Activated CD4-positive, alpha-beta T cell treated with anti-CD3 and anti-CD28 coated beads for 36 hours (primary cell): ENCODE measurements at regions of chr17 and their contacts with region 1.

Region 1: GRCh38 chr17:43211480-43212402 is at the start of gene TMEM106A:
- DNase-seq: peak; percentile 88
- ATAC-seq: peak; percentile 92
- H3K4me3 Mint-ChIP-seq: peak within 1 kb of the TSS; percentile 83
- H3K27ac Mint-ChIP-seq: peak within 1 kb of the TSS; percentile 92
- H3K4me1 Mint-ChIP-seq: peaks cover 25% of the 10 kb centered on the region
- H3K27me3 Mint-ChIP-seq: no peaks in the 10 kb centered on the region
- total RNA-seq, gene TMEM106A: 10.7 to 10.8 TPM

Region 2: DNA sequence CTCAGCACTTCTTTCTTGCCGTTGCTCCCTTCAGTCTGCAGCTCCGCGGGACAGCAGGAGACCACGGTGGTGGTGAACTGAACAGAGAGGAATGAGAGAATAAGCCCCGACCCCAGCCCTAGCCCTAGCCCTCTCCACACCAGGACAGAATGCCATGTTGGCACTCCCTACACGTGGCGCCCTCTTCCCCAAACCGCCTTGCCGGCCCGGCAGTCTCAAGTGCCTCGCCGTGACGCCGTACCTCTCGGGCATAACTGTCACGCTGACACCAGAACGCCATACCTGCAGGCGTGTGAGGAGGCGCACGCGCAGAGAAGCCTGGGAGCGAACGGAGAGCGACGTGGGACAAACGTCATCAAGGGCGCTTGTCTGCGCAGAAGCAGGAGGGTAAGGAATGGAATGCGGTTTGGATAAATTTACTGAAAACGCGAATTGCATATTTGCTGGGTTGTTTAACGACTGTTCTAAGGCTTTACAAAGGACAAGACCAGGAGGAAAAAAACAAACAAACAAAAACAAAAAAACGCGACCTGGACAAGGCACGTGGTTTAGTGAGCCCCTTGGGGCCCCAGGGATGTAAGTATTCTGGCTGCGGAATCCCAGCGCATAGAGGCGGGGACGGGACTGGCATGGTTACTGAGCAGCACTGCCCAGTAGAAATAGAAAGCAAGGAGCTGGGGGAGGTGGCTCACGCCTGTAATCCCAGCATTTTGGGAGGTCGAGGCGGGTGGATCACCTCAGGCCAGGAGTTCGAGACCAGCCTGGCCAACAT is 247.4 kb before region 1 on chr17 and contains the start of gene AARSD1:
- CTCF ChIA-PET with region 1: no interaction called
- POLR2A ChIA-PET with region 1: no interaction called
- intact Hi-C with region 1: loop called in 1 of 2 experiments (anchors 1 kb)
- DNase-seq: peak; percentile 95
- ATAC-seq: peak; percentile 95
- H3K4me3 Mint-ChIP-seq: peak within 1 kb of the TSS; percentile 93
- H3K27ac Mint-ChIP-seq: peak within 1 kb of the TSS; percentile 90
- H3K4me1 Mint-ChIP-seq: peaks cover 22% of the 10 kb centered on the region
- H3K27me3 Mint-ChIP-seq: no peaks in the 10 kb centered on the region
- total RNA-seq, gene AARSD1: 40.8 to 58.6 TPM

Region 3: GRCh38 chr17:42980398-42981397 is 231.0 kb before region 1 on chr17 and contains the start of gene RUNDC1:
- CTCF ChIA-PET with region 1: no interaction called
- POLR2A ChIA-PET with region 1: no interaction called
- intact Hi-C with region 1: loop called in 1 of 2 experiments (anchors 1 kb)
- DNase-seq: peak; percentile 95
- ATAC-seq: peak; percentile 87
- H3K4me3 Mint-ChIP-seq: peak within 1 kb of the TSS; percentile 99
- H3K27ac Mint-ChIP-seq: peak within 1 kb of the TSS; percentile 98
- H3K4me1 Mint-ChIP-seq: peaks cover 32% of the 10 kb centered on the region
- H3K27me3 Mint-ChIP-seq: no peaks in the 10 kb centered on the region
- total RNA-seq, gene RUNDC1: 12.3 to 12.5 TPM

Region 4: GRCh38 chr17:43024407-43025289 is 187.1 kb before region 1 on chr17 and contains the start of gene RND2:
- CTCF ChIA-PET with region 1: interaction called, 3 read pairs
- POLR2A ChIA-PET with region 1: no interaction called
- intact Hi-C with region 1: loop called in 1 of 2 experiments (anchors 1 kb)
- DNase-seq: peak; percentile 89
- ATAC-seq: peak; percentile 68
- H3K4me3 Mint-ChIP-seq: peak within 1 kb of the TSS; percentile 78
- H3K27ac Mint-ChIP-seq: peak within 1 kb of the TSS; percentile 71
- H3K4me1 Mint-ChIP-seq: peaks cover 26% of the 10 kb centered on the region
- H3K27me3 Mint-ChIP-seq: no peaks in the 10 kb centered on the region
- total RNA-seq, gene RND2: 0.05 to 0.16 TPM

Region 5: DNA sequence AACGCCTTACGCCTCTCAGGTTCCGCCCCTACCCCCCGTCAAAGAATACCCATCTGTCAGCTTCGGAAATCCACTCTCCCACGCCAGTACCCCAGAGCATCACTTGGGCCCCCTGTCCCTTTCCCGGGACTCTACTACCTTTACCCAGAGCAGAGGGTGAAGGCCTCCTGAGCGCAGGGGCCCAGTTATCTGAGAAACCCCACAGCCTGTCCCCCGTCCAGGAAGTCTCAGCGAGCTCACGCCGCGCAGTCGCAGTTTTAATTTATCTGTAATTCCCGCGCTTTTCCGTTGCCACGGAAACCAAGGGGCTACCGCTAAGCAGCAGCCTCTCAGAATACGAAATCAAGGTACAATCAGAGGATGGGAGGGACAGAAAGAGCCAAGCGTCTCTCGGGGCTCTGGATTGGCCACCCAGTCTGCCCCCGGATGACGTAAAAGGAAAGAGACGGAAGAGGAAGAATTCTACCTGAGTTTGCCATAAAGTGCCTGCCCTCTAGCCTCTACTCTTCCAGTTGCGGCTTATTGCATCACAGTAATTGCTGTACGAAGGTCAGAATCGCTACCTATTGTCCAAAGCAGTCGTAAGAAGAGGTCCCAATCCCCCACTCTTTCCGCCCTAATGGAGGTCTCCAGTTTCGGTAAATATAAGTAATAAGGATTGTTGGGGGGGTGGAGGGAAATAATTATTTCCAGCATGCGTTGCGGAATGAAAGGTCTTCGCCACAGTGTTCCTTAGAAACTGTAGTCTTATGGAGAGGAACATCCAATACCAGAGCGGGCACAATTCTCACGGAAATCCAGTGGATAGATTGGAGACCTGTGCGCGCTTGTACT is 86.4 kb before region 1 on chr17 and contains the start of gene BRCA1:
- CTCF ChIA-PET with region 1: interaction called, 3 read pairs
- POLR2A ChIA-PET with region 1: no interaction called
- intact Hi-C with region 1: loop called in 1 of 2 experiments (anchors 1 kb)
- DNase-seq: peak; percentile 97
- ATAC-seq: peak; percentile 99
- H3K4me3 Mint-ChIP-seq: peak within 1 kb of the TSS; percentile 99
- H3K27ac Mint-ChIP-seq: peak within 1 kb of the TSS; percentile 99
- H3K4me1 Mint-ChIP-seq: peaks cover 19% of the 10 kb centered on the region
- H3K27me3 Mint-ChIP-seq: no peaks in the 10 kb centered on the region
- total RNA-seq, gene BRCA1: 99.9 to 115 TPM

Region 6: GRCh38 chr17:43155666-43156065 is 56.1 kb before region 1 on chr17:
- CTCF ChIA-PET with region 1: no interaction called
- POLR2A ChIA-PET with region 1: no interaction called
- intact Hi-C with region 1: no loop called
- DNase-seq: no peak
- ATAC-seq: no peak
- H3K4me3 Mint-ChIP-seq: no peak overlapping the region
- H3K27ac Mint-ChIP-seq: no peak overlapping the region
- H3K4me1 Mint-ChIP-seq: no peaks in the 10 kb centered on the region
- H3K27me3 Mint-ChIP-seq: no peaks in the 10 kb centered on the region

Region 7: GRCh38 chr17:43200127-43200526 is 11.6 kb before region 1 on chr17:
- CTCF ChIA-PET with region 1: interaction called, 6 read pairs
- POLR2A ChIA-PET with region 1: interaction called, 7 read pairs
- intact Hi-C with region 1: loop called in 1 of 2 experiments (anchors 2 kb)
- DNase-seq: peak; percentile 30
- ATAC-seq: peak; percentile 61
- H3K4me3 Mint-ChIP-seq: no peak overlapping the region
- H3K27ac Mint-ChIP-seq: peak overlapping the region; percentile 37
- H3K4me1 Mint-ChIP-seq: peaks cover 8% of the 10 kb centered on the region
- H3K27me3 Mint-ChIP-seq: no peaks in the 10 kb centered on the region

Region 8: GRCh38 chr17:43388359-43389045 is 176.8 kb after region 1 on chr17:
- CTCF ChIA-PET with region 1: interaction called, 3 read pairs
- POLR2A ChIA-PET with region 1: no interaction called
- intact Hi-C with region 1: loop called in 1 of 2 experiments (anchors 5 kb)
- DNase-seq: peak; percentile 95
- ATAC-seq: peak; percentile 82
- H3K4me3 Mint-ChIP-seq: peak overlapping the region; percentile 80
- H3K27ac Mint-ChIP-seq: peak overlapping the region; percentile 98
- H3K4me1 Mint-ChIP-seq: peaks cover 16% of the 10 kb centered on the region
- H3K27me3 Mint-ChIP-seq: no peaks in the 10 kb centered on the region